ENCODE measurements at regions of chr6 and their contacts with region 1.

Region 1: DNA sequence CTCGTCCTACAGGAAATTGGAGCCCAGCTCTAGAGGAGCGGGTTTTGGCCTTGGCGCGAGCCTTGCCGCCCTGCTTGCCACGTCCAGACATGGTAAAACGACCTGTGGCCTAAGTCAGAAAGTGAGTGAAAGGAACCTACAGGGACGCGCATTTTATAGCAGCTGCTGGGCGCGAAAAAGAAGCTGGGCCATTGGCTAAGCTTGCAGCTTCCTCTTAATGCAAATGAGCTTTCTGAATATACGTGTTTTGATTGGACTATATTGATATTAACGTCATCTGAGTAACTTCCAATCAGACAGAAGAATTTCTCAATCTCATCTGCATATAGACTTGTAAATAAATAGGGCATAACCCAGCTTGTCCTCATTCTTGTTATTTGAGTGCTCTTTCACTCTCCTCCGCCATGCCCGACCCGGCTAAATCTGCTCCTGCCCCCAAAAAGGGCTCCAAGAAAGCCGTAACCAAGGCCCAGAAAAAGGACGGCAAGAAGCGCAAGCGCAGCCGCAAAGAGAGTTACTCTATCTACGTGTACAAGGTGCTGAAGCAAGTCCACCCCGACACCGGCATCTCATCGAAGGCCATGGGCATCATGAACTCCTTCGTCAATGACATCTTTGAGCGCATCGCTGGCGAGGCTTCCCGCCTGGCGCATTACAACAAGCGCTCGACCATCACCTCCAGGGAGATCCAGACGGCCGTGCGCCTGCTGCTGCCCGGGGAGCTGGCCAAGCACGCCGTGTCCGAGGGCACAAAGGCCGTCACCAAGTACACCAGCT is 18.9 kb downstream of the OR2B2 start:
- DNase-seq: peak; percentile 93
- H3K4me3 Mint-ChIP-seq: no peak overlapping the region
- H3K27ac Mint-ChIP-seq: no peak overlapping the region
- H3K4me1 Mint-ChIP-seq: peaks cover 61% of the 10 kb centered on the region
- H3K27me3 Mint-ChIP-seq: no peaks in the 10 kb centered on the region

Region 2: GRCh38 chr6:26025894-26026832 is 1867.1 kb before region 1 on chr6:
- intact Hi-C with region 1: loop called (anchors 2 kb)
- DNase-seq: peak; percentile 88
- H3K4me3 Mint-ChIP-seq: peak overlapping the region; percentile 85
- H3K27ac Mint-ChIP-seq: peak overlapping the region; percentile 96
- H3K4me1 Mint-ChIP-seq: peaks cover 93% of the 10 kb centered on the region
- H3K27me3 Mint-ChIP-seq: no peaks in the 10 kb centered on the region

Region 3: DNA sequence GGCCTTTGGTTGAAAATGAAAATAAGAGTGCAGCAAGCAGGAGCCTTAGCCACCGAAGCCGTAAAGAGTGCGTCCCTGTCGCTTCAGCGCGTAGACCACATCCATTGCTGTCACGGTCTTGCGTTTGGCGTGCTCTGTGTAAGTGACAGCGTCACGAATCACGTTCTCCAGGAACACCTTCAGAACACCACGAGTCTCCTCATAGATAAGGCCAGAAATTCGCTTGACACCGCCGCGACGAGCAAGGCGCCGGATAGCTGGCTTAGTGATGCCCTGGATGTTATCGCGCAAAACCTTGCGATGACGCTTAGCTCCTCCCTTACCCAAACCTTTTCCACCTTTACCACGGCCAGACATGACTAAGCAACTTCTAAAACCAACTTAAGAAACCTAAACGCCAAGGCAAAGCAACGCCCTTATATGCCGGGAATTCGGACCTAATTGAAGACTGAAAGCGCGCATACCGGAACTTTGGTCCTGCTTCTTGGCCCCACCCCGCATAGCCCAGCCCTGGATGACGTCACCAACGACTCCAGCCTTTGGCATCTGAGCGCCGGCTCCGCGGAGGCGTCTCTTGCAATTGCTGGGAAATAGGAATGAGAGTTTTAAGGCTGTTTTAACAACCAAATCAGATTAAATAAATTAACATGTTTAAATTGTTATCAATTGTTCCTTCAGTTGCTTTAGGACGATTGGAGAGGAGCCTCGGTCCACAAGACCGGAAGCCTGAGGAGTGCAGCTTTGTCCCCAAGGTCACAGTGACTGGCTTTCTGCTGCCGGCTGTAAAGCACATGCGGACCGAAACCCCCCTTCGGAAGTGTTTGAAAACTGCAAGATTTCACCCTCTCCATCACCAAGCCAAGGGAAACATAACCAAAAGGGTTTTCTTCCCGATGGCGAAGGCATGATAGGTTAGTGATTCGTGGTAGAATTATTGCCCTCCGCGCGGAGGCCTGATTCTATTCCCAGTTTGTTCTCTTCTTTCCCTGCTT is 1607.8 kb before region 1 on chr6:
- intact Hi-C with region 1: loop called (anchors 10 kb)
- DNase-seq: peak; percentile 95
- H3K4me3 Mint-ChIP-seq: peak overlapping the region; percentile 93
- H3K27ac Mint-ChIP-seq: peak overlapping the region; percentile 93
- H3K4me1 Mint-ChIP-seq: peaks cover 44% of the 10 kb centered on the region
- H3K27me3 Mint-ChIP-seq: peaks cover 4% of the 10 kb centered on the region

Region 4: GRCh38 chr6:27132532-27133280 is 760.5 kb before region 1 on chr6:
- intact Hi-C with region 1: loop called (anchors 1 kb)
- DNase-seq: peak; percentile 92
- H3K4me3 Mint-ChIP-seq: no peak overlapping the region
- H3K27ac Mint-ChIP-seq: no peak overlapping the region
- H3K4me1 Mint-ChIP-seq: peaks cover 34% of the 10 kb centered on the region
- H3K27me3 Mint-ChIP-seq: no peaks in the 10 kb centered on the region

Region 5: DNA sequence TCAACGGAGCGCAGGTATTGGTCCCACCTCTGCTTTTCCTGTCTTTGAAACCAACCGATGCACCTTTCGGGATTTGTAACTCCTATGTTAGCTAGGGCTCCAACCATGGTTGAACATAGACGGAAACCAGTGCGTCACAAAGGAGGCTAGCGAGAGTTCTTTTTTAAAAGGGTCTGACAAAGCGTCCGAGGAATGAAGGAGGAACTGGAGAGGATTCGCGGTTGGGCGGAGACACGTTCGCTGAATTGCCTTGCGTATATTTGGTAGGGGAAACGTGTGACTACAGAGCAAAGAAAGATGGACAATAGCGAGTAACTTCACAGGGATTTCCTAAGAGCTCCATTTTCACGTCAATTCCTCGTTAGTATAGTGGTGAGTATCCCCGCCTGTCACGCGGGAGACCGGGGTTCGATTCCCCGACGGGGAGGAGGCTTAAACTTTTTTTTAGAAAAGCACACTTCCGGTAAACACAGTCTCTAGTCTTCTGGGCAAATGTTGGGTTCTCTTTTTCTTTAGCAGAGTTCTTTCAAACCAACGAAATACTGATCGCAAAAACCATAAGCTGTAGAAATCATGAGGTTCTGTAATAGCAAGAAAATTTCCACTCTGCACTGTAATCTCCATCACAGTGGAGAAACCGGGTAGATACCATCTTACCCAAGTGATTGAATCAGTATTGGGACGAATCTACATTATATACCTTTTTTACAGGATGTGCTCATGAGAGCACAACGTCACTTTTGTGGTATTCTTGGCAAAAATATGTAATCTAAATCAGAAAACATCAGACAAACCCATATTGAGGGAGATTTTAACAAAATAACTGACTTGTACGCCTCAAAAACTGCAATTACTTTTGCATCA is 413.7 kb before region 1 on chr6:
- intact Hi-C with region 1: loop called (anchors 2 kb)
- DNase-seq: peak; percentile 81
- H3K4me3 Mint-ChIP-seq: no peak overlapping the region
- H3K27ac Mint-ChIP-seq: no peak overlapping the region
- H3K4me1 Mint-ChIP-seq: no peaks in the 10 kb centered on the region
- H3K27me3 Mint-ChIP-seq: peaks cover 10% of the 10 kb centered on the region

Region 6: GRCh38 chr6:27772261-27773001 is 120.8 kb before region 1 on chr6:
- intact Hi-C with region 1: loop called (anchors 1 kb)
- DNase-seq: peak; percentile 82
- H3K4me3 Mint-ChIP-seq: no peak overlapping the region
- H3K27ac Mint-ChIP-seq: peak overlapping the region; percentile 56
- H3K4me1 Mint-ChIP-seq: peaks cover 19% of the 10 kb centered on the region
- H3K27me3 Mint-ChIP-seq: peaks cover 22% of the 10 kb centered on the region

Region 7: DNA sequence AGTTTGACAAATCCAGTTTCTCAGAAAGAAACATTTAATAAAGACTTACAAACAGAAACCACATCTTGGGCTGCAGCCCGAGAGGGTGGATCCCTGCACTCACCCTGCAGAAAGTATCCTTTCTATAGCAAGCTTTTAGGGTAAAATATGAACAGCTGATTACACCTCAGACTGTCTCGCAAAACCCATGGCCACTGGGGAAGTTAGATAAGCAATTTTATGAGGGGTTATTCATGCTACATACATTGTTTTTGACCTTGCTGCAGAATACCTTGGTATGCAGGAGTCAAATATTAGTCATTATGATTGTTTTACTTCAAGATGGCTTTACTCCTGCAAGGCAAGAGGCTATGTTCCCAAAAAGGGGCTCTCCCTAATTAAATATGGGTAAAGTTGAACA is 108.0 kb before region 1 on chr6:
- intact Hi-C with region 1: no loop called
- DNase-seq: no peak
- H3K4me3 Mint-ChIP-seq: no peak overlapping the region
- H3K27ac Mint-ChIP-seq: no peak overlapping the region
- H3K4me1 Mint-ChIP-seq: no peaks in the 10 kb centered on the region
- H3K27me3 Mint-ChIP-seq: peaks cover 21% of the 10 kb centered on the region

Region 8: DNA sequence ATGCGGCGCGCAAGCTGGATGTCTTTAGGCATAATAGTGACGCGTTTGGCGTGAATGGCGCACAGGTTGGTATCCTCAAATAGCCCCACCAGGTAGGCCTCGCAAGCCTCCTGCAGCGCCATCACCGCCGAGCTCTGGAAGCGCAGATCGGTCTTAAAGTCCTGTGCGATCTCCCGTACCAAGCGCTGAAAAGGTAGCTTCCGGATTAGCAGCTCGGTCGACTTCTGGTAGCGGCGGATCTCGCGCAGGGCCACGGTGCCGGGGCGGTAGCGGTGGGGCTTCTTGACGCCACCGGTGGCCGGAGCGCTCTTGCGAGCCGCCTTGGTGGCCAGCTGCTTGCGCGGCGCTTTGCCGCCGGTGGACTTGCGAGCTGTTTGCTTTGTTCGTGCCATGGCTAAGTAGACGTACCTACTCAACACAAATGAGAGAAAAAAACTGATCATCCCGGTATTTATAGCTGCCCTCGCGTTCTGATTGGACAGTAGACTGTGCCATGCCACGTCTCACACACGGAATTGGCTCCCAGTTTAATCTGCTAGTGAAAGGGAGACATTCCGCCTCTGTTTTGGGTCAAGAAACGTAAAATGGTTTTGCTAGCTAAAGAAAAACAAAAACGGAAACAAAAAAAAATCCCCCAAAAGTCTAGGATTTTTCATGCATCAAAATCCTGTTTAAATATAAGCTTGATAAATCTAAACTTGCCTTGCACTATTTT is 21.2 kb before region 1 on chr6:
- intact Hi-C with region 1: loop called (anchors 1 kb)
- DNase-seq: peak; percentile 87
- H3K4me3 Mint-ChIP-seq: peak overlapping the region; percentile 88
- H3K27ac Mint-ChIP-seq: peak overlapping the region; percentile 96
- H3K4me1 Mint-ChIP-seq: peaks cover 63% of the 10 kb centered on the region
- H3K27me3 Mint-ChIP-seq: no peaks in the 10 kb centered on the region

Region 9: DNA sequence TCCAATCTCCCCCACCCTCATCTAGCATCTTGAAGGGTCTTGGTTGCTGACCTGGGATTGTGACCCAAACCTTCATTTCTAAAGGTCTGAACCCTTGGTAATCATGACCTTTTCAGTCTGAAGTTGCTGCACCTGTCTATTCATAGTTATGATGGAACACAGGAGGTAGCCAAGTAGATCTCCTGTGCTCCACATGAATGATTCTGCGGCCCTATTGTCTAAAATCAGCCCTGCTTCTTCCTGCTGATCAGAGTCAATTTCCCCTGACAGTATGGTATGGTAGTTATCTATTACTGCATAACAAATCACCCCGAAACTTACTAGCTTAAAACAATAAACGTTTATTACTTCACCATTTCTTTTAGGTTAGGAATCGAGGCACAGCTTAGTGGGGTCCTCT is 72.8 kb after region 1 on chr6:
- intact Hi-C with region 1: no loop called
- DNase-seq: no peak
- H3K4me3 Mint-ChIP-seq: no peak overlapping the region
- H3K27ac Mint-ChIP-seq: no peak overlapping the region
- H3K4me1 Mint-ChIP-seq: no peaks in the 10 kb centered on the region
- H3K27me3 Mint-ChIP-seq: peaks cover 4% of the 10 kb centered on the region